MCF 10A (cell line): ENCODE measurements at regions of chr14 and their contacts with region 1.

Region 1: DNA sequence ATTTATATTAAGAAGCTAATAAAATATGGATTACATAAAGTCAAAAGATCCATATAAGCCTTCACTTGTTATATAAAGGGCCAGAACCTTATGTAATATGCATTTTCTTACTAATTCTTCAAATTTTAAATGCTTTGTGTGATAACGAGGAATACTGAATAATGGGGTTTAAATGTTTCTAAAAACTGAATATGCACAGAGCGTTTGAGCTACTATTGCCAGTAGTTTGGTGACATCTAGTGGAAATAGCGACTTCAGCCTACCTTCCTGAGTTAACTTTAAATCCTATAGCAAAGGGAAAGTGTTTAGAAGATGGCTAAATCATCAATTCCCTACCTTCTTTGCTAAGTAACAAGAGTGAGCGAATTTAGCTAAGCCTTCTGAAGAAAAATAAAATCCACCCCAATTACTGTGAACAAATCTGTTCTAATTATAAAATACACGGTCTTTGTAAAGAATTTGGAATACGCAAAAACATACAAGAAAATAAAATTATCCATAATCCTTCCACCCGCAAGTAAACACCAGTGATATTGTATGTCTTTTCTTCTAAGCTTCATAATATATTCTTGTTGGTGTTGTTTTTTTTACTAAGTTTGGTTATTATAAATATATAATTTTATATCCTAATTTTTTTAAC is 115.5 kb upstream of the G2E3 start:
- DNase-seq: peak; percentile 56
- H3K4me3 Mint-ChIP-seq: no peak overlapping the region
- H3K27ac Mint-ChIP-seq: no peak overlapping the region
- H3K4me1 Mint-ChIP-seq: no peaks in the 10 kb centered on the region
- H3K27me3 Mint-ChIP-seq: peaks cover 24% of the 10 kb centered on the region
- CTCF ChIP-seq: peak; percentile 57

Region 2: DNA sequence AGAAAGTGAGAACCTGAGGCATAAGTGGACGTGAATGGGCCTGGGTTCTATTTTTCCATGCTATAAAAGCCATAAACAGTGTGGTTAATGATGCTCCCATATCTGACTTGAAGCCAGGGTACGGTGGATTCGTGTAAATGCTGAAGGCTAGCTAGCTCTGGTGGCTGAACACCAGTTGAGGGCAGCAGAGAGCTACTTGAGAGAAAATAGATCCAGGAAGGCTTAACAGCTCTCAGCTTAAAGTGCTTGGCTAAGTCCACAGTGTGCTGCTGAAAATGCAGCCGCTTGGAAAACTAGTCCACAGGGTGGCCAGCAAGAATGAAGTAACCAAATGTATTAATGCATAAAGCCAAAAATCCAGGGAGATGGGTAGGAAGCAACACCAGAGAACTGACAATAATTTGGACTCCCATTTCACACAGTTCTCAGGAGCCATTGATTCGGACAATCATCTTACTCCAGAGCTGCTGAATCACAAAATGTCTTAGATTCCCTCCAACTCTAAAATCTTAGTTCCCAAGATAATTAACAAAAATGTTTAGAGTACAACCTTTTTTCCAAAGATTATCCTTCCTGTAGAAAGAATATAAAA is 1691.9 kb before region 1 on chr14:
- CTCF ChIA-PET with region 1: interaction called, 10 read pairs
- POLR2A ChIA-PET with region 1: no interaction called
- intact Hi-C with region 1: loop called (anchors 10 kb)
- DNase-seq: peak; percentile 73
- H3K4me3 Mint-ChIP-seq: no peak overlapping the region
- H3K27ac Mint-ChIP-seq: no peak overlapping the region
- H3K4me1 Mint-ChIP-seq: peaks cover 13% of the 10 kb centered on the region
- H3K27me3 Mint-ChIP-seq: peaks cover 26% of the 10 kb centered on the region
- CTCF ChIP-seq: peak; percentile 46

Region 3: DNA sequence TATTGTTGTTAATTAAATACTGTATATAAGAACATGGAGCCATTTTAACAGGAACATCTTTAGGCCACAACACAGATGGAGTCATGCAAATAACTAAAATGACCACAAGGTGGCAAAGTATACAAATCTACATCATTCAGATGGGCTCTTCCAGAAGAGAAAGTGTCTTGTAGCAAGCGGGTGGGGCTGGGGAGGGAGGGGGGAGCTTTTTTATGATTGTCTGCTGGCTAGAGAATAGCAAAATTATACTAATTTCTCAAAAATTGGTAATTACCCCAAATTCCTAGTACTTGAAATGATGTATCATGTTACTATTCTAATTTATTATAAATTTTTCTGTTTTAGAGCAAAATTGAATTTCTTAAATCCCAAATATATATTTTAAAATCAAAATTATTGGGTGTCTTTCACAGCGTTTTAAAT is 894.5 kb before region 1 on chr14:
- CTCF ChIA-PET with region 1: interaction called, 4 read pairs
- POLR2A ChIA-PET with region 1: no interaction called
- intact Hi-C with region 1: loop called (anchors 2 kb)
- DNase-seq: peak; percentile 64
- H3K4me3 Mint-ChIP-seq: no peak overlapping the region
- H3K27ac Mint-ChIP-seq: no peak overlapping the region
- H3K4me1 Mint-ChIP-seq: no peaks in the 10 kb centered on the region
- H3K27me3 Mint-ChIP-seq: peaks cover 22% of the 10 kb centered on the region
- CTCF ChIP-seq: peak; percentile 40

Region 4: GRCh38 chr14:30375296-30375892 is 68.1 kb before region 1 on chr14:
- CTCF ChIA-PET with region 1: interaction called, 52 read pairs
- POLR2A ChIA-PET with region 1: no interaction called
- intact Hi-C with region 1: loop called (anchors 1 kb)
- DNase-seq: peak; percentile 68
- H3K4me3 Mint-ChIP-seq: no peak overlapping the region
- H3K27ac Mint-ChIP-seq: no peak overlapping the region
- H3K4me1 Mint-ChIP-seq: no peaks in the 10 kb centered on the region
- H3K27me3 Mint-ChIP-seq: peaks cover 47% of the 10 kb centered on the region
- CTCF ChIP-seq: peak; percentile 82

Region 5: DNA sequence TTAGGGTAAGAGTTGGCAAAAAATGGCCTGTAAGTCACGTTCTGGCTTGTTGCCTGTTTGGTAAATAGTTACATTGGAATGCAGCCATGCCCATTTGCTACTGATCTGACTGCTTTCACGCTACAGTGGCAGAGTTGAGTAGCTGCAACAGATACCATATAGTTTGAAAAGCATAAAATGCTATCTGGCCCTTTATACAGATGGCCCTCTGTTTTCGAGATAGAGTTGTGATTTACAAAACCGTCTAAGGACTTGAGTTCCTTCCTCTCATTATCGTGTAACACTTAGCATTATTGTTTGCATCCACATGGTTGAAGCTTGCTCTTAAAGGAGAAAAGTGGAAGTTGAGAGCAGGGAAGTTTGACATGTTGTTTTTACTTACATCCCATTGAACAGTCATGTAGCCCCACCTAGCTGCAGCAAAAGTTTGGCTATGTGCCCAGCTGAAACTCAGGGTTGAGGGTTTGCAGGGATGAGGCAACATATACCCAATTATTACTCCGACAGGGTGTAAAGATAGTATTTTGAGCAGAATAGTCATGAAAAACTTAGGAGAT is 167.4 kb after region 1 on chr14:
- CTCF ChIA-PET with region 1: interaction called, 3 read pairs
- POLR2A ChIA-PET with region 1: no interaction called
- intact Hi-C with region 1: loop called (anchors 10 kb)
- DNase-seq: peak; percentile 89
- H3K4me3 Mint-ChIP-seq: peak overlapping the region; percentile 69
- H3K27ac Mint-ChIP-seq: peak overlapping the region; percentile 69
- H3K4me1 Mint-ChIP-seq: peaks cover 30% of the 10 kb centered on the region
- H3K27me3 Mint-ChIP-seq: no peaks in the 10 kb centered on the region
- CTCF ChIP-seq: peak; percentile 18

Region 6: DNA sequence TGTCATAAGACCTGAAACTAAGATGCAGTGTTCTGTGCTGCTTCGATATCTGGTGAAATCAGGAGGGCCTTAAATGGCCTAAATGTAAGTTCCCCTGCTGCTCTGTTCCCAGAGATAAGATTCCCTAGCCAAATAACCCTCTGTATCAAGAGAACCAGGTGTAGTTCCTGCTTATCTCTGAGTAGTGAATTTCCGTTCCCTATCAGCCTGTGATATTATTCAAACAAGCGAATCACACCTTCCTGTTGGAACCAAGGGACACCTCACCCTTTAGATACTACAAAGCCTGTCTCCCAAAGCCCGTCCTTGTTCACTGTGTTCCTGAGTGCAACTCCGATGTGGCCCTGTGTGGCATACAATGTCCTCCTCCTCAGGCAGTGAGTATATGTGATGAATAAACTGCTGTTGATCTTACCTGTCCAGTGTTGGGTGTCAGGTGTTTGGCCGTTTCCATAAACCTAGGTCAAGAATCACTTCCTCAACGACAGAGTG is 378.6 kb after region 1 on chr14:
- CTCF ChIA-PET with region 1: no interaction called
- POLR2A ChIA-PET with region 1: no interaction called
- intact Hi-C with region 1: no loop called
- DNase-seq: no peak
- H3K4me3 Mint-ChIP-seq: no peak overlapping the region
- H3K27ac Mint-ChIP-seq: no peak overlapping the region
- H3K4me1 Mint-ChIP-seq: no peaks in the 10 kb centered on the region
- H3K27me3 Mint-ChIP-seq: no peaks in the 10 kb centered on the region
- CTCF ChIP-seq: no peak